Heart left ventricle (tissue), 16 donors: ENCODE measurements at regions of chr21 and their contacts with region 1.

Region 1: DNA sequence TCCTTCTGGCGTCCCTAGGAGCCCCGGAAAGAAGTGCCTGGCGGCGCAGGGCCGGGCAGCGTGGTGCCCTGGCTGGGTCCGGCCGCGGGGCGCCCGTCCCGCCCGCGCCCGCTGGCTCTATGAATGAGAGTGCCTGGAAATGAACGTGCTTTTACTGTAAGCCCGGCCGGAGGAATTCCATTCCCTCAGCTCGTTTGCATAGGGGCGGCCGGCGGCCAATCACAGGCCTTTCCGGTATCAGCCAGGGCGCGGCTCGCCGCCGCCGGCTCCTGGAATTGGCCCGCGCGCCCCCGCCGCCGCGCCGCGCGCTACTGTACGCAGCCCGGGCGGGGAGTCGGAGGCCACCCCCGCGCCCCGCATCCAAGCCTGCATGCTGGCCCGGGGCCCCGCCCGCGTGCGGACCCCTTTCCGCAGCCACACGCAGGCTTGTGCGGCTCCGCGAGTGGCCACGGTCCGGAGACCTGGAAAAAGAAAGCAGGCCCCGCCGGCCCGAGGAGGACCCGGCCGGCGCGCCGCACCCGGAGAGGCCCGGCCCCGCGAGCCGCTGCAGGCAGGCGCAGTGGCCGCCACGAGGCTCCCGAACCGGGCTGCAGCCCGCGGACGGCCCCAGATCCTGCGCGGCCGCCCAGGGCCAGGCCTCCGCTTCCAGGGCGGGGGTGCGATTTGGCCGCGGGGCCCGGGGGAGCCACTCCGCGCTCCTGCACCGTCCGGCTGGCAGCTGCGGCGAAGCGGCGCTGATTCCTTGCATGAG is 160.4 kb downstream of the RUNX1 start:
- DNase-seq: peak; percentile 92 to 96 (median 95)
- ATAC-seq: peak; percentile 86 to 93 (median 90)
- H3K4me3 ChIP-seq: peak overlapping the region; percentile 42 to 84 (median 66)
- H3K27ac ChIP-seq: peak overlapping the region; percentile 70 to 98 (median 88)
- H3K4me1 ChIP-seq: peaks cover 0 to 52% (median 15%) of the 10 kb centered on the region in 12 donors
- H3K27me3 ChIP-seq: peaks cover 25 to 85% (median 68%) of the 10 kb centered on the region in 9 donors
- CTCF ChIP-seq: no peak
- POLR2A ChIP-seq: peak in 1 of 2 donors; percentile 88

Region 2: DNA sequence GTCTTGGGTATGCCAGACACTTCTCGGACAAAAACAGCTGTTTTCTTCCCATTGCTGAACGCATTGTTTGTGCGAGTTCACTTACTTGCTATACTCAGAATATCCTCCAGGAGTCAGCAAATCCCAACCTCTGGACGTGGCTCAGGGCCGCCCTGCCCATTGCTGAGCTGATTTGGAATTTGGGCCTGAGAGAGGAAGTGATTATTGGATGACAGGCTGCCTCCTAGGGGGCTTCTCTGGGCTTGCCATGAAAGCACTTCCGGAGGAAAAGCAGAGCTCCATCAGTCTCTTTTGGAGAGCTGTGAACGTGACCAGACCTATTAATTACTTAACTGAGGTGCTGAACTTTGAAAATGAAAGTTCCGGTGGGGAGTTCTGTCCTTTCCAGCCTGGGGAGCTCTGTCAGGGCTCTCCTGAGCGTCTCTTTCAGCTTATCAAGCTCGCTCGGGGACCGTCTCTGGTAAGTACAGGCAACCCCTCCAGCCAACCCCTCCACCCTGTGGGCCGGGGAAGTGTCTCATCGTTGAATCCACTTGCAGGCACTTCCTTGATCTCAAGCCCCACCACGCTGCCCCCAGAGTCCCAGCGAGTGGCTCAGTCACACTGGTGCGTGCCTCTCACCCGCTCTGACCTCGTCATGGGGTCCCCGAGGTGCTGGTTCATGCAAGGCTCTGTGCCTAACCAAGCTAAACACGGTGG is 143.0 kb before region 1 on chr21:
- intact Hi-C with region 1: loop called in 2 of 10 experiments (anchors 5 kb)
- DNase-seq: peak; percentile 63 to 82 (median 71)
- ATAC-seq: peak; percentile 81 to 93 (median 90)
- H3K4me3 ChIP-seq: peak overlapping the region in 9 of 12 donors; percentile 0 to 55 (median 40)
- H3K27ac ChIP-seq: peak overlapping the region in 2 of 12 donors; percentile 43 to 46
- H3K4me1 ChIP-seq: peaks cover 0 to 14% (median 2%) of the 10 kb centered on the region in 12 donors
- H3K27me3 ChIP-seq: peaks cover 0 to 13% (median 0%) of the 10 kb centered on the region in 9 donors
- CTCF ChIP-seq: peak; percentile 62 to 90 (median 83)
- POLR2A ChIP-seq: no peak

Region 3: DNA sequence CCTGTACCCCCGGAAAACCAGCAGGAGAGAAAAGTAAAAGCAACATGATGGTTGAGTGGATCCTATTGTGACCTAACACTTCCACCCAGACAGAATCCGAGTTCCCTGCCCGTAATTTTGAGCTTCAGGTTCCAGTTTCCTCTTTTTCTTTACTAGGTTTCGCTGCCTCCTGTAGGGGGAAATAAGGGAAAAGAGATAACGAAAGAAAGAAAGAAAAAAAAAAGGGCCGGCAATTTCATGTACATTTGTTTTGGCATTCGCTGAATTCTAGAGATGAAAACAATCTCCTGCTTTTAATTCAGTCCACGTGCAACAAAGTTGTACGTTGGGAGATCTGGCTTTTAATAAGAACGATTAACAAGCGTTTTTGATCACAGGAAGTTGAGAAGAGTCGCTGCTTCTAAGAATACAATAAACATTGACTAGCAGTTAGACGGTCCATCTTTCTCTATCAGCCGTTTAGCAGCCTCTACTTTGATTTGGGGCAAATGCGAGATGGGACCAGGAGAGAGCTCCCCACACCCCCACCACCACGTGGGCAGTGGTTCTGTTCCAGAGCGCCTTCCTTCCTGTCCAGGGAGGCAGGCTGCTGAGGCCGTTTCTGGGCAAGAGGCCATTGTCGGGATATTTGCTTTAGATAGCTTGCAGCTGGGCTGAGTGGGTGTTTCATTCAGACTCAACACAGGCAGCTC is 316.3 kb after region 1 on chr21:
- intact Hi-C with region 1: loop called in 3 of 10 experiments (anchors 5 to 10 kb)
- DNase-seq: peak; percentile 85 to 91 (median 87)
- ATAC-seq: peak; percentile 39 to 83 (median 73)
- H3K4me3 ChIP-seq: peak overlapping the region in 8 of 12 donors; percentile 14 to 43 (median 18)
- H3K27ac ChIP-seq: peak overlapping the region; percentile 1 to 80 (median 71)
- H3K4me1 ChIP-seq: peaks cover 0 to 69% (median 48%) of the 10 kb centered on the region in 12 donors
- H3K27me3 ChIP-seq: no peaks in the 10 kb centered on the region
- CTCF ChIP-seq: no peak
- POLR2A ChIP-seq: no peak

Region 4: DNA sequence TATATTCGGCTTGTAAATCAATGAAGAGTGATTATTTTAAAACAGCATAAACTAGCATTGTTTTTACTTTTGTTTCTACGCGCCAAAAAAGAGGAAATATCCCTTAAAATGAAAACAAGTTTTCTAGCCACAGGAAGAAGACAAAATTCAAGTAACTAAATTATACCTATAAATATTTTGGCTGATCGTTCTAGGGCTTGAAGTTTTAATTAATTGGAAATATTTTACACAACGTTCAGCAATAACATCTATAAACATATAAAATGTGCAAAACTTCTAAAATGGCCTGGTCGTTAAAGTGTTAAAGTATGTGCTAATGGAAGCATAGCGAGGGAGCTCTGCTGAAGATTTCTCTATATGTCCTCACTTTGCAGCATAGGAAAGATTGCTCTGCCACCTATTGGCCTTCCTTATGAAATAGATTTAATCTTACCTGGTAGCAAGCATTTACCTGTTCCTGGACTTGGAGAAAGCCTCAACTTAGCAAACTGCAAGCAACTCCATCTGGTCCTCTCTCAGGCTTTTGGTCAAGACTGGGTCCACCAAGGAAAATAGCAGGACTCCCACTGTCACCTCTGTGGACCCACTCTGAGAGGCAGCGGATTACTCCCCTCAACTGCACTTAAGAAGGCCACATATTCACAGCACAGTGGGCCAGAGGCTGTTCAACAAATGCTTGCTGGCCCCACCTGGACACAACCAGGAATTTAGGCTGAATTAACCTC is 511.7 kb after region 1 on chr21:
- intact Hi-C with region 1: loop called in 9 of 10 experiments (anchors 2 to 10 kb)
- DNase-seq: peak in 1 of 5 donors; percentile 22
- ATAC-seq: peak in 3 of 4 donors; percentile 63 to 73 (median 67)
- H3K4me3 ChIP-seq: peak overlapping the region in 1 of 12 donors; percentile 19
- H3K27ac ChIP-seq: peak overlapping the region in 2 of 12 donors; percentile 8 to 42
- H3K4me1 ChIP-seq: peaks cover 0 to 27% (median 0%) of the 10 kb centered on the region in 12 donors
- H3K27me3 ChIP-seq: peaks cover 0 to 20% (median 0%) of the 10 kb centered on the region in 9 donors
- CTCF ChIP-seq: peak in 11 of 12 donors; percentile 18 to 59 (median 48)
- POLR2A ChIP-seq: no peak

Region 5: DNA sequence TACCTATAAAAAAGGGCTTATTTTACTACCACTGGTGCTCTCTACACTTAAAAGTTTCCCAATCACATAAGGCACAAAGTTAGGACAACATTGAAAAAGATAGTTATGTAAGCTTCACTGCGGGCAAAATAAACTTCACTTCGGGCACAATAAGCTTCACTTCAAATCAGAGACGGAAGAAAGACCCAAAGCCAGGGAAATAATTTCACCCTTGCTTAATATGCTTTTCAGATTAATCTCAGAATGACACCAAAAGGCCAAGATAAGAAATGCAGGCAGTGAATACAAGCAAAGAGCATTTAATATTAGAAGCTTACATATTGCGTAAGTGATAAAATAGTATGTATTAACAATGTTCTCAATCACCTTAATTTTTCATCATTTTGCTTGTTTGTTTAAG is 727.3 kb after region 1 on chr21:
- intact Hi-C with region 1: loop called in 2 of 10 experiments (anchors 10 kb)
- DNase-seq: no peak
- ATAC-seq: peak in 1 of 4 donors; percentile 20
- H3K4me3 ChIP-seq: no peak overlapping the region
- H3K27ac ChIP-seq: peak overlapping the region in 1 of 12 donors; percentile 28
- H3K4me1 ChIP-seq: peaks cover 0 to 17% (median 0%) of the 10 kb centered on the region in 12 donors
- H3K27me3 ChIP-seq: peaks cover 0 to 5% (median 0%) of the 10 kb centered on the region in 9 donors
- CTCF ChIP-seq: peak in 10 of 12 donors; percentile 11 to 61 (median 38)
- POLR2A ChIP-seq: no peak

Region 6: GRCh38 chr21:35840197-35840799 is 951.6 kb after region 1 on chr21:
- intact Hi-C with region 1: loop called in 6 of 10 experiments (anchors 5 to 10 kb)
- DNase-seq: peak in 4 of 5 donors; percentile 48 to 64 (median 56)
- ATAC-seq: peak in 3 of 4 donors; percentile 51 to 62 (median 58)
- H3K4me3 ChIP-seq: no peak overlapping the region
- H3K27ac ChIP-seq: no peak overlapping the region
- H3K4me1 ChIP-seq: peaks cover 0 to 7% (median 0%) of the 10 kb centered on the region in 12 donors
- H3K27me3 ChIP-seq: no peaks in the 10 kb centered on the region
- CTCF ChIP-seq: peak; percentile 62 to 87 (median 82)
- POLR2A ChIP-seq: no peak

Region 7: DNA sequence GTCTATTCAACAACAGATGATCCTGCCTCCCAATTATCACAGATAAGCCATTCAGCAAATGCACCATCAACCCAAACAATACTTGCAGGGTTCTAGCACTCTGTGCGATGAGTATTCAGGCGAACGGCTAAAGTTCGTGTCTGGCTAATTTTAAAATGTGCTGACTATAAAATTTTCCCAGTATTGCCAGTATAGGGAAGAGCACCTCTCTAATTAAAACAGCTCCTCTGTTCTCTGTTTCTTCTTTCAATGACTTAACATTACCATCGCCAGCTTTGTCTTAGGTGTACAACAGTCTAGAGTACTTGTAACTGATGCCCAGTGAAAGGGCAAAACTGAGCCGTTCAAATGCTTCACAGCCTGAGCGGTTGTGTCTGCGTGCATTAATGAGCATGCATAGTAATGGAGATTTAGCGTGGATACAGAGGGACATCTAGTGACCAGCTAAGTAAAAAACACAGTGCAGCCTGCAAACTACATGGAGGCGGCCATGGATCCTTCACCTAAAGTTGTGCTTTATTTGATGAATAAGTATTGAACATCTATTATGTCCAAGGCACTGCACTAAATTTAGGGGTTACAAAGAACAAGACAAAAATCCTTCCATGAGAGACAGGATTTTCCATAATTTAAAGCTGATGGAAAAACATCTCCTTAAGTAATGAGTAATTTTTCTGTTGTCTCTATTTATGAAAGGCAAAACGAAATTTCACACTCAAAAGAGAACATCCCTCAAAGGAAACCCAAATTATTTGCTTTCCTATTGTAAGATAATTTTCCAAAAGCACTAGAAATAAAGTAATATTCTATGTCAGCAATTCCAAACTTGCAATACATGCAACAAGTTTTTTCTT is 1051.6 kb after region 1 on chr21:
- intact Hi-C with region 1: loop called in 1 of 10 experiments (anchors 10 kb)
- DNase-seq: peak in 4 of 5 donors; percentile 29 to 48 (median 43)
- ATAC-seq: peak; percentile 82 to 99 (median 96)
- H3K4me3 ChIP-seq: peak overlapping the region in 1 of 12 donors; percentile 22
- H3K27ac ChIP-seq: peak overlapping the region in 1 of 12 donors; percentile 5
- H3K4me1 ChIP-seq: peaks cover 0 to 12% (median 1%) of the 10 kb centered on the region in 12 donors
- H3K27me3 ChIP-seq: no peaks in the 10 kb centered on the region
- CTCF ChIP-seq: peak; percentile 50 to 78 (median 64)
- POLR2A ChIP-seq: no peak